Mammary epithelial cell (primary cell): ENCODE measurements at regions of chr11 and their contacts with region 1.

Region 1: GRCh38 chr11:105862736-105863367 is 159.2 kb downstream of the MSANTD4 start:
- DNase-seq: peak; percentile 35
- H3K4me3 ChIP-seq: no peak overlapping the region
- H3K27ac ChIP-seq: no peak overlapping the region
- H3K4me1 ChIP-seq: no peaks in the 10 kb centered on the region
- H3K27me3 ChIP-seq: no peaks in the 10 kb centered on the region
- CTCF ChIP-seq: peak; percentile 63 to 66

Region 2: GRCh38 chr11:104254347-104254746 is 1608.5 kb before region 1 on chr11:
- CTCF ChIA-PET with region 1: no interaction called
- dilution Hi-C with region 1: no loop called
- in situ Hi-C with region 1: no loop called
- intact Hi-C with region 1: loop called (anchors 5 kb)
- DNase-seq: peak; percentile 33
- H3K4me3 ChIP-seq: no peak overlapping the region
- H3K27ac ChIP-seq: no peak overlapping the region
- H3K4me1 ChIP-seq: no peaks in the 10 kb centered on the region
- H3K27me3 ChIP-seq: no peaks in the 10 kb centered on the region
- CTCF ChIP-seq: peak; percentile 82 to 83

Region 3: GRCh38 chr11:104609311-104610085 is 1253.4 kb before region 1 on chr11:
- CTCF ChIA-PET with region 1: no interaction called
- dilution Hi-C with region 1: no loop called
- in situ Hi-C with region 1: no loop called
- intact Hi-C with region 1: loop called (anchors 2 kb)
- DNase-seq: peak; percentile 27
- H3K4me3 ChIP-seq: no peak overlapping the region
- H3K27ac ChIP-seq: no peak overlapping the region
- H3K4me1 ChIP-seq: no peaks in the 10 kb centered on the region
- H3K27me3 ChIP-seq: no peaks in the 10 kb centered on the region
- CTCF ChIP-seq: peak; percentile 75 to 87

Region 4: GRCh38 chr11:104946907-104947306 is 915.9 kb before region 1 on chr11:
- CTCF ChIA-PET with region 1: interaction called, 4 read pairs
- dilution Hi-C with region 1: no loop called
- in situ Hi-C with region 1: no loop called
- intact Hi-C with region 1: loop called (anchors 10 kb)
- DNase-seq: peak; percentile 48
- H3K4me3 ChIP-seq: no peak overlapping the region
- H3K27ac ChIP-seq: no peak overlapping the region
- H3K4me1 ChIP-seq: no peaks in the 10 kb centered on the region
- H3K27me3 ChIP-seq: no peaks in the 10 kb centered on the region
- CTCF ChIP-seq: peak; percentile 54 to 56

Region 5: GRCh38 chr11:105466582-105467228 is 396.1 kb before region 1 on chr11:
- CTCF ChIA-PET with region 1: no interaction called
- dilution Hi-C with region 1: no loop called
- in situ Hi-C with region 1: no loop called
- intact Hi-C with region 1: no loop called
- DNase-seq: peak; percentile 23
- H3K4me3 ChIP-seq: no peak overlapping the region
- H3K27ac ChIP-seq: no peak overlapping the region
- H3K4me1 ChIP-seq: no peaks in the 10 kb centered on the region
- H3K27me3 ChIP-seq: no peaks in the 10 kb centered on the region
- CTCF ChIP-seq: no peak

Region 6: GRCh38 chr11:105790840-105791239 is 72.0 kb before region 1 on chr11:
- CTCF ChIA-PET with region 1: no interaction called
- dilution Hi-C with region 1: no loop called
- in situ Hi-C with region 1: no loop called
- intact Hi-C with region 1: no loop called
- DNase-seq: no peak
- H3K4me3 ChIP-seq: no peak overlapping the region
- H3K27ac ChIP-seq: no peak overlapping the region
- H3K4me1 ChIP-seq: no peaks in the 10 kb centered on the region
- H3K27me3 ChIP-seq: no peaks in the 10 kb centered on the region
- CTCF ChIP-seq: no peak

Region 7: DNA sequence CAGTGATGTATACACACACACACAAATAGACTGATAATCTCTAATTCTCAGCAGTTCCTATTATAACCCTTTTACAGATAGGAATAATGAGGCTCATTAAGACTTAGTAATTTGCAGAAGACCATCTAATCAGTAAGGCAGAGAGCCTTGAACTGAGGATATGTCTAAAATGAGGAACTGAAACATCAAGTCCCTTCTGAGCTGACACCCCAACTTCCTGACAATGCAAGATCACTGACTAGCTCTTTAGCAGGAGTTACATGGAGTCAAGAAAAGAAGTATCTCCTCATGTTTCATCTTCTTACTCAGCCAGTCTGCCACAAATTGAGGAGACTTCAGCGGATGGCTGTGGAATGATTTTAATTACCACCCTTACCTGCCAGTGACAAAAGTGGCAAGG is 33.8 kb before region 1 on chr11:
- CTCF ChIA-PET with region 1: no interaction called
- dilution Hi-C with region 1: no loop called
- in situ Hi-C with region 1: no loop called
- intact Hi-C with region 1: no loop called
- DNase-seq: no peak
- H3K4me3 ChIP-seq: no peak overlapping the region
- H3K27ac ChIP-seq: no peak overlapping the region
- H3K4me1 ChIP-seq: no peaks in the 10 kb centered on the region
- H3K27me3 ChIP-seq: peaks cover 4% of the 10 kb centered on the region
- CTCF ChIP-seq: no peak